Caco-2 (cell line): ENCODE measurements at regions of chr6 and their contacts with region 1.

Region 1: DNA sequence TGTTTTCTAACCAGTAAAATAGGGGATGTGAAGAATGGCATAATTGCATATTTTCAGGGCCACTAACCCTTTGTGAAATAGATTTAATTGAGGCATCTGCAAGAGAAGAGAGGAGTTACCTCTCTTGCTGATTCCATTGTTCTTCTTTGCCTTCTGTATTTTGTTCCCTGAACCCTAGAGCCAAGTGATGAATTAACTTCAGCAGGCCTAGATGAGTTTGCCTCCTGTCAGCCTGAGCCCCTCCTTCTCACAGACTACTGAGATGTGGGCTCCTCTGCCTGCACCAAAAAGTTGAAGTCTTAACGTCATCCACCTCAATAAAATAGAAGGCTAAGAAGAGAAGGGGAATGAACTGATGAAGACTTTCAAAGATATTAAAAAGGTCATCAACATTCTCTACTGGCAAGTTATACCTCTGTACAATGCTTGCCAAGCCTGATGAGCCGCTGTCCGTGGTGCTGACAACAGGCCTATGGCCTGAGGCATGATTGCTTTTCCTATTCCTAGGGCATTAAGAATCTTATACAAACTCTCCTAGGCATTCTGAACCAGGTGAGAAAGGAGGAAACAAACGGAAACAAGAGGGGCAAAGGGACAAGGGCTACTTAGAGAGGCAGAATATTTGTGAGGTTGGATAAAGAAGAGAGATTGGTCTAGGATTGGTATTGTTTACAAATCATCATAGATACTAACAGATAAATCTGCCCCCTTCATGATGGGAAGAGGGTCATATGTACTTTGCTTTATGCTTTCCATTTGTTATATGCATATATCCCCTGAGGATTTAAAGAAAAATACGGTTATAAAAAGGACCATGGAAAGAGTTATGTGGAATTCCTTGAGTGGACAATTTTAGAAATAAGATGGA is 46.8 kb downstream of the CD24 start:
- DNase-seq: peak; percentile 69 to 81
- H3K4me3 ChIP-seq: no peak overlapping the region
- H3K4me3 Mint-ChIP-seq: no peak overlapping the region
- H3K27ac Mint-ChIP-seq: no peak overlapping the region
- H3K4me1 ChIP-seq: peaks cover 25% of the 10 kb centered on the region
- H3K4me1 Mint-ChIP-seq: peaks cover 13% of the 10 kb centered on the region
- H3K27me3 ChIP-seq: no peaks in the 10 kb centered on the region
- H3K27me3 Mint-ChIP-seq: no peaks in the 10 kb centered on the region
- CTCF ChIP-seq: no peak

Region 2: DNA sequence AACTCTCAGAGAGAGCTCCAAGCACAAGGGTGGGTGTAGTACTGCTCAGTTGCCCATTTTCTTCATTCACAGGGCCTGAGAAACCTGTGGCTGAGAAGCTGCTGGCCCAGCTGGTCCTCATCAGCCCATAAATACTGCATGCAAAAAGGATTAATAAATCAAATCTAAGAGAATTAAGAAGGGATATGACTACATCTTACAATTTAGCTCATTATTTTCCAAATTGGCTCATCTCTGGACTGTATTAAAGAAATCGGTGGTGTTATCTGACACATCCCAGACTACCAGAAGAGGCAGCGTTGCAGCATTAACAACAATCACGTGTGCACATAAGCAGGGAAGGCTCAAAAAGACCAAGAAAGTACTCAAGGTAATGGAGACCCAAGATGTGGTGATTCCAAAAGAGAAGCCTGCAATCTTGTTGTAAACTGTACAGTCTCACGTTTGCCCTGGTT is 43.9 kb before region 1 on chr6:
- CTCF ChIA-PET with region 1: no interaction called
- POLR2A ChIA-PET with region 1: no interaction called
- intact Hi-C with region 1: loop called (anchors 1 kb)
- DNase-seq: no peak
- H3K4me3 ChIP-seq: no peak overlapping the region
- H3K4me3 Mint-ChIP-seq: no peak overlapping the region
- H3K27ac Mint-ChIP-seq: no peak overlapping the region
- H3K4me1 ChIP-seq: peaks cover 35% of the 10 kb centered on the region
- H3K4me1 Mint-ChIP-seq: peaks cover 31% of the 10 kb centered on the region
- H3K27me3 ChIP-seq: no peaks in the 10 kb centered on the region
- H3K27me3 Mint-ChIP-seq: no peaks in the 10 kb centered on the region
- CTCF ChIP-seq: peak; percentile 18

Region 3: GRCh38 chr6:106963544-106963943 is 35.8 kb after region 1 on chr6:
- CTCF ChIA-PET with region 1: no interaction called
- POLR2A ChIA-PET with region 1: no interaction called
- intact Hi-C with region 1: loop called (anchors 5 kb)
- DNase-seq: no peak
- H3K4me3 ChIP-seq: no peak overlapping the region
- H3K4me3 Mint-ChIP-seq: no peak overlapping the region
- H3K27ac Mint-ChIP-seq: peak overlapping the region; percentile 17
- H3K4me1 ChIP-seq: 0 out of 2 replicates have a peak, but pooled peaks cover 5% of the 10 kb centered on the region
- H3K4me1 Mint-ChIP-seq: peaks cover 14% of the 10 kb centered on the region
- H3K27me3 ChIP-seq: no peaks in the 10 kb centered on the region
- H3K27me3 Mint-ChIP-seq: no peaks in the 10 kb centered on the region
- CTCF ChIP-seq: no peak

Region 4: DNA sequence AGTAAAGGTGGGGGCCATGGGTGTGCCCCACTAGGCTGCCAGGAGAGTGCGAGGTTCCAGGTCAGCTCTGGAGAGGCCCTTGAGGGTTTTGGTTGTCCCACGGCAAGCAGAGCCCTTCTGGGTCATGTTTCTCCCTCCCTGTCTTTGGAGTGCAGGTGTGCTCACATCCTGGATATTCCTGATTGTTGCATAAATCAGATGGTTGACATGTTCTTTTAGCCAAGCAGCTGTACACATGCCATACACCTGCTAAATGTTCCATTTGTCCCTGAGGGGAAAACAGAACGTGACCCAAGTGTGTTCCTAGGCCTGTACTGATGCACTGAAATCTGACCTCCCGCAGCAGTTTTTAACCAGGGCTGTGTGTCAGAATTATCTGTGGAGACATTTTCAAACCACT is 265.1 kb after region 1 on chr6:
- CTCF ChIA-PET with region 1: no interaction called
- POLR2A ChIA-PET with region 1: no interaction called
- intact Hi-C with region 1: no loop called
- DNase-seq: no peak
- H3K4me3 ChIP-seq: no peak overlapping the region
- H3K4me3 Mint-ChIP-seq: no peak overlapping the region
- H3K27ac Mint-ChIP-seq: no peak overlapping the region
- H3K4me1 ChIP-seq: no peaks in the 10 kb centered on the region
- H3K4me1 Mint-ChIP-seq: no peaks in the 10 kb centered on the region
- H3K27me3 ChIP-seq: no peaks in the 10 kb centered on the region
- H3K27me3 Mint-ChIP-seq: no peaks in the 10 kb centered on the region
- CTCF ChIP-seq: no peak